Dendritic cell treated with granulocyte-macrophage colony-stimulating factor and Interleukin-4, amounts not matched to agents 40 ng/mL and 50 ng/mL, for 4 days (primary cell): ENCODE measurements at regions of chrX and their contacts with region 1.

Region 1: GRCh38 chrX:30822068-30822681 is 66.9 kb downstream of the TAB3 start:
- H3K4me3 Mint-ChIP-seq: no peak overlapping the region
- H3K27ac Mint-ChIP-seq: peak overlapping the region; percentile 47
- H3K4me1 Mint-ChIP-seq: peaks cover 32% of the 10 kb centered on the region
- H3K27me3 Mint-ChIP-seq: no peaks in the 10 kb centered on the region

Region 2: GRCh38 chrX:30735839-30736238 is 86.3 kb before region 1 on chrX:
- intact Hi-C with region 1: loop called (anchors 5 kb)
- H3K4me3 Mint-ChIP-seq: no peak overlapping the region
- H3K27ac Mint-ChIP-seq: no peak overlapping the region
- H3K4me1 Mint-ChIP-seq: no peaks in the 10 kb centered on the region
- H3K27me3 Mint-ChIP-seq: no peaks in the 10 kb centered on the region